ENCODE measurements at regions of chr11 and their contacts with region 1.

Region 1: GRCh38 chr11:112280268-112281126 is 19.8 kb upstream of the PLET1 start:
- DNase-seq: peak; percentile 47
- ATAC-seq: peak; percentile 91
- H3K4me3 Mint-ChIP-seq: peak overlapping the region; percentile 91
- H3K27ac Mint-ChIP-seq: peak overlapping the region; percentile 80
- H3K4me1 Mint-ChIP-seq: peaks cover 19% of the 10 kb centered on the region
- H3K27me3 Mint-ChIP-seq: no peaks in the 10 kb centered on the region
- CTCF ChIP-seq: no peak

Region 2: GRCh38 chr11:111932611-111932950 is 347.9 kb before region 1 on chr11:
- CTCF ChIA-PET with region 1: interaction called, 11 read pairs
- POLR2A ChIA-PET with region 1: no interaction called
- intact Hi-C with region 1: loop called (anchors 1 kb)
- DNase-seq: no peak
- ATAC-seq: no peak
- H3K4me3 Mint-ChIP-seq: no peak overlapping the region
- H3K27ac Mint-ChIP-seq: no peak overlapping the region
- H3K4me1 Mint-ChIP-seq: peaks cover 11% of the 10 kb centered on the region
- H3K27me3 Mint-ChIP-seq: peaks cover 6% of the 10 kb centered on the region
- CTCF ChIP-seq: no peak

Region 3: GRCh38 chr11:111949519-111950426 is 330.7 kb before region 1 on chr11:
- CTCF ChIA-PET with region 1: no interaction called
- POLR2A ChIA-PET with region 1: no interaction called
- intact Hi-C with region 1: no loop called
- DNase-seq: no peak
- ATAC-seq: no peak
- H3K4me3 Mint-ChIP-seq: no peak overlapping the region
- H3K27ac Mint-ChIP-seq: no peak overlapping the region
- H3K4me1 Mint-ChIP-seq: peaks cover 10% of the 10 kb centered on the region
- H3K27me3 Mint-ChIP-seq: no peaks in the 10 kb centered on the region
- CTCF ChIP-seq: no peak

Region 4: DNA sequence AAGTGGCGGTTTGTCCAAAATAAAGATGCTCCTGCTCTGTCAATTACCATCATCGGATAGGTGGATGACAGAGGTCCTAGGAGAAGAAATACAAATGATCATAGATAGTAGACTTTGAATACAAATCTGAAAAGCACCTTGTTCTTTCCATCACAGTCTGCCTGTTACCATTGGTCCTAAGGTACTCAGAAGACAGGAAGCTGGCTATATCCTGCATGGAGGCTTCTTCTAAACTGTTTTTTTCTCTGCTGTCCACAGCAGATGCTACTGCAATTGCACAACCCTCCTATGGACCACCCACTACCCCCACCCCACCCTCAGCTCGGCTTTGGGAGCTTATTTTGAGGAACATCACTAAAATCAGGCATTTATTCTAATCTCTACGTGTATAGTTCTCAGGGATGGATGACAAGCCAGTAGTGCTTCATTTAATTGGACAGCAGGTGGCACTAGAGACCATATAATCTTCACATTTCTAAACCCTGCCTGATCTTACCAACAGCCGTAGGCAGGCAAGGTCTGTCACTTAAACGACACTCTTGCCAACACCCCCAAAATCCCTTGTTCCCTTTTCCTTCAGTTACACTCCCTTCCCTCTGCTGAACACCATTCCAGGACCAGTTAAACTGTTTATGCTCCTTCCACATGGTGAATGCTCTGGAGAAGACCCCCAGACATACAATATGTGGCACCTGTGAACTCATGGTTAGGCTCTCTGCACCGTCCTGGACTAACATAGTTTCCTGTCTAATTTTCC is 60.8 kb before region 1 on chr11:
- CTCF ChIA-PET with region 1: interaction called, 166 read pairs
- POLR2A ChIA-PET with region 1: interaction called, 4 read pairs
- intact Hi-C with region 1: loop called (anchors 1 kb)
- DNase-seq: no peak
- ATAC-seq: peak; percentile 100
- H3K4me3 Mint-ChIP-seq: no peak overlapping the region
- H3K27ac Mint-ChIP-seq: no peak overlapping the region
- H3K4me1 Mint-ChIP-seq: peaks cover 2% of the 10 kb centered on the region
- H3K27me3 Mint-ChIP-seq: no peaks in the 10 kb centered on the region
- CTCF ChIP-seq: peak; percentile 58

Region 5: DNA sequence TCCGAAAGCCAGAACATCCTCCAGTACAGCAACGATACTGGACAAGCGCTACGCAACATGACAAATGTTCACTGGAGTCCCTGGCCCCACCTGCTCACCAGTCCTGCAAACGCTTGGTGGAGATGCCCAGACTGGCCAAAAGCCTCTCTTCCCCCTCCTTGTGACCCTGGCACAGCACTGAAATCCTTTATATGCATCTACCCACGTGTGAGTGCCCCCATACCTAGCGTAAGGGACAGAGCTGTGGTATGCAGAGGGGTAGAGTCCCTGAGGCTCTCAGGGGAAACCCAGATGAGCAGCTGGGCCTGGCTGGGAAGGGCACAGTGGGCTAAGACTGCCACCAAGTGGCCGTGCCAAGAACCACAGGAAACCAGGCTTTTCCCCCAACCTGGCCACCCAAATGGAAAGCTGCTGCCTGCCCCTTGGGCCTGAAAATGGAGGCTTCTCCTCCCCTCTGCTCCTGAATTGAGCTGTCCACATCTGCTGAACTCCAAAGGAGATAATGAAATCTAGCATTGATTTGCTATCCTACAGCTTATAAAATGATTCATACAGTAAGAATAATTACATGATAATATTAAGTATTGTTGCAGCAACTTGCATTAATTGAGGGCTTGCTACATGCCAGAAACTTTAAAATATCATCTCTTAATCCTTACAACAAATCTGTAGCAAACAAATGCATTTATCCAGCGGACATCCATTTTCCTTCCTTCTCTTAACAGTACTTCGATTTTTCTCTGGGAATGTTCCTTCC is 1009.1 kb after region 1 on chr11:
- CTCF ChIA-PET with region 1: interaction called, 10 read pairs
- POLR2A ChIA-PET with region 1: no interaction called
- intact Hi-C with region 1: no loop called
- DNase-seq: peak; percentile 66
- ATAC-seq: peak; percentile 100
- H3K4me3 Mint-ChIP-seq: no peak overlapping the region
- H3K27ac Mint-ChIP-seq: no peak overlapping the region
- H3K4me1 Mint-ChIP-seq: peaks cover 2% of the 10 kb centered on the region
- H3K27me3 Mint-ChIP-seq: peaks cover 4% of the 10 kb centered on the region
- CTCF ChIP-seq: peak; percentile 83

Region 6: DNA sequence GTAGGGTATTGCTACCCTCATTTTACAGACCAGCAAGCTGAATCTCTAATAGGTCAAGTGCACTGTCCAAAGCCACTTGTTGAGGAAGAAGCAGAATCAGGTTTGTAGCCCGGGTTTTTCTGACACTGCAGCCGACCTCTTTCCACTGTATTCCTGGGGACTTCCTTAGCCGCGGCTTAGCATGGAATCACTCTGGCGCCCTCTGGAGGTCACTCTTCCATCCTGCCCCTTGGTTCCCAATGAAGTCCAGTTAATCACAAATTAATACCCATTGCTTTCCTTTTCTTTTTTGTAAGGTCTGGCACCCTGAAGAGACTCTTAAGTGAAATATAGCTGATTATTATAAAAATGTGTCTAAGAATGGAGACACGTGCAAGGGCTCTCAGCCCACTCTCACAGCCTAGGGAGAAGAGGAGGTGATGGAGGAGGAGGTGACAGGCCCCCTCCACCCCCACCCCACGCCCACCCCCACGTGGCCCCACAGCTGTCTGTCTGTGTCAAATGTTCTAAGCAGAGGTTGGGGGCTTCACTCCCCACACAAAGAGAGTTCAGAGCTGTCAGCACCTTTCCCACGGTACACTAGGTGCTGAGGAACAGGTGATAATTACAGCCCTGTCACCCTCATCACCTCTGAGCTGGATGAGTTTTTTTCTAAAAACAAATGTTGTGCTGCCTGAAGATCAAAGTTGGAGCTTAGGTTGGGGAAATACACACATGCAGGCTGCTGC is 1252.4 kb after region 1 on chr11:
- CTCF ChIA-PET with region 1: no interaction called
- POLR2A ChIA-PET with region 1: no interaction called
- intact Hi-C with region 1: loop called (anchors 1 kb)
- DNase-seq: peak; percentile 24
- ATAC-seq: peak; percentile 31
- H3K4me3 Mint-ChIP-seq: no peak overlapping the region
- H3K27ac Mint-ChIP-seq: no peak overlapping the region
- H3K4me1 Mint-ChIP-seq: no peaks in the 10 kb centered on the region
- H3K27me3 Mint-ChIP-seq: peaks cover 10% of the 10 kb centered on the region
- CTCF ChIP-seq: peak; percentile 41